ENCODE measurements at regions of chr9 and their contacts with region 1.

Region 1: GRCh38 chr9:88460587-88461332 is 72.5 kb downstream of the SPIN1 start:
- DNase-seq: no peak
- H3K4me3 ChIP-seq: no peak overlapping the region
- H3K27ac ChIP-seq: no peak overlapping the region
- H3K4me1 ChIP-seq: peaks cover 3% of the 10 kb centered on the region
- H3K27me3 ChIP-seq: no peaks in the 10 kb centered on the region
- CTCF ChIP-seq: no peak
- EP300 ChIP-seq: no peak
- POLR2A ChIP-seq: no peak

Region 2: DNA sequence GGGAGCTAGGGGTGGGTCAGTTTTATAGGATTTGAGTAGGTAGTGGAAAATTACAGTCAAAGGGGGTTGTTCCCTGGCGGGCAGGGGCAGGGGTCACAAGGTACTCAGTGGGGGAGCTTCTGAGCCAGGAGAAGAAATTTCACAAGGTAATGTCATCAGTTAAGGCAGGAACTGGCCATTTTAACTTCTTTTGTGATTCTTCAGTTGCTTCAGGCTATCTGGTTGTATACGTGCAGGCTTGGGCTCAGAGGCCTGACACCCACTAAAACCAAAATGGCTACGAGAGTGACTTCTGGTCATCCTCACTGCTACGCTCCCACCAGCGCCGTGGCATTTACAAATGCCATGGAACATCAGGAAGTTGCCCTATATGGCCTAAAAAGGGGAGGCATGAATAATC is 53.5 kb after region 1 on chr9:
- intact Hi-C with region 1: loop called in 1 of 4 experiments (anchors 10 kb)
- DNase-seq: no peak
- H3K4me3 ChIP-seq: no peak overlapping the region
- H3K27ac ChIP-seq: no peak overlapping the region
- H3K4me1 ChIP-seq: no peaks in the 10 kb centered on the region
- H3K27me3 ChIP-seq: no peaks in the 10 kb centered on the region
- CTCF ChIP-seq: no peak
- EP300 ChIP-seq: no peak
- POLR2A ChIP-seq: no peak

Region 3: GRCh38 chr9:88814577-88814976 is 353.8 kb after region 1 on chr9:
- intact Hi-C with region 1: no loop called
- DNase-seq: no peak
- H3K4me3 ChIP-seq: no peak overlapping the region
- H3K27ac ChIP-seq: no peak overlapping the region
- H3K4me1 ChIP-seq: no peaks in the 10 kb centered on the region
- H3K27me3 ChIP-seq: no peaks in the 10 kb centered on the region
- CTCF ChIP-seq: no peak
- EP300 ChIP-seq: no peak
- POLR2A ChIP-seq: no peak

Measured in ovary (tissue), 10 donors.